ENCODE measurements at regions of chr2 and their contacts with region 1.

Region 1: DNA sequence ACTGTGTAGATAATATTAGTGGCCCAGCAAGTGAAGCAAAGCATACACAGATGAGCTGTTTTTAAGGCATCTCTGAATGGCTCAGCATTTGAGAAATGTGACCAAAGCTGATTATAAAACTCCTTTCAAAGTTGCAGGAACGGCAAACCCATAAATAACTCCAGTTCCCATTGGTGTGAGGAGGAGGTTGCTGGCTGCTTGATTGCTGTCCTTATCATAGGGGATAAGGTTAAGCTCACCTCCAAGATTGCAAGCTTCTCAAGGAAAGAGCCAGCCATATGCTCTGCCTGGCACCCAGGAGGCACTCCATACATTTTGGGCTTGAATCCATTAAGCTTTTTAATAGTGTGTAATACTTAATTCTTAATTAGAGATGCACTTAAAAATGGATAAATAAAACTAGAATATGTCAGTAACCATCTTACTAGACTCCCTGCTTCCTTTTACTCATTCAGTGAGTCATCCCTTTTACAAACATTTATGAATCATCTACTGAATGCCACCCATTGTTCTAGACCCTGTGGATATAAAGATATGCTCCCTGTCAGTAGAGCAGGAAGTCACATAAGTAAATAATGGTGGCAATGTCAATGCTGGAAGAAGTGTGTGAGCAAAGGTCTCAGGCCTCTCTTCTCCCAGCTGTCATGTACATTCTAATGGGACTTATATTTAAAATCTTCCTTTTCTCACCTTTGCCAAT is 99.3 kb downstream of the SPATS2L start:
- DNase-seq: no peak
- H3K4me3 Mint-ChIP-seq: no peak overlapping the region
- H3K27ac Mint-ChIP-seq: peak overlapping the region; percentile 25
- H3K4me1 Mint-ChIP-seq: peaks cover 68% of the 10 kb centered on the region
- H3K27me3 Mint-ChIP-seq: no peaks in the 10 kb centered on the region

Region 2: GRCh38 chr2:200383383-200384110 is 22.2 kb before region 1 on chr2:
- intact Hi-C with region 1: loop called (anchors 2 kb)
- DNase-seq: no peak
- H3K4me3 Mint-ChIP-seq: peak overlapping the region; percentile 56
- H3K27ac Mint-ChIP-seq: peak overlapping the region; percentile 28
- H3K4me1 Mint-ChIP-seq: peaks cover 54% of the 10 kb centered on the region
- H3K27me3 Mint-ChIP-seq: peaks cover 2% of the 10 kb centered on the region

Region 3: GRCh38 chr2:200422532-200423261 is 16.9 kb after region 1 on chr2:
- intact Hi-C with region 1: loop called (anchors 2 kb)
- DNase-seq: no peak
- H3K4me3 Mint-ChIP-seq: no peak overlapping the region
- H3K27ac Mint-ChIP-seq: peak overlapping the region; percentile 6
- H3K4me1 Mint-ChIP-seq: peaks cover 20% of the 10 kb centered on the region
- H3K27me3 Mint-ChIP-seq: no peaks in the 10 kb centered on the region

Region 4: DNA sequence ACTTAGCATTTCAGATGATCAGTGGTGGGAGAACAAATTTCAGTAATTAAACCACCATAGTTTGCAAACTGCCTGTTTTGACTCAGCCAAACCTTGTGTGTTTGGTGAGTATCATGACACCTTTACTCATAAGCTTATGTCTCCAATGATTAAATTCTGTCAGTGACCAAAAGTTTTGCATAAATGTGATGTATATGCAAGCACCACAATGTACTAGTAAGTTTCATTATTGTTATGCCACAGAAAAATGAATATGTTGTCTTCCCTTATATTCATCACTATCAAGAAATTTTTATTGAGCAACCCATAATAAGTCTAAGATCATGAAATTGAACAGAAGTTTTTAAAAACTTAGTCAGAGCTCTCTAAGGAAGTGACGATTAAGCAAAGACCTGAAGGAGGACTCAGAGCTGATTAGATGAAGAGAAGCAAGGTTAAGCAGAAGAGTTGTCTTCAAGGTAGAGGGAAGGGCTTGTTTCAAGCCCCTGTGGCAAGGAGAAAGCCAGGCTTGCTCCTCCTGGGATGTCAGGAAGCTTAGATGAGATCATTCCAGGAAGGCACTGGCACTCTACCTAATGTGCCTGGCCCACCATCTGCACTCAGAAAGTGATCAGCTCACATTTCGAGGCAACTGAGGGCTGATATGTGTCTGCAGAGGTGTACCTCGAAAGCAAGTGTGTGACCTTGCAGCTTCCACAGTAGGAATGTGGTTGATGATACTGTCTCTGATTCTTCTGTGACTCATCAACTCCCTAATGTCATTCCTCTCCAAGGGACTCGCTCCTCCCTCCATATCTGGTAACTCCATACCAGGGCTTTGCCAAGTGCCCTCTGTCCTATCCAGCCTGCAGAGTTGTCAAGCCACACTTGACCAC is 49.4 kb after region 1 on chr2:
- intact Hi-C with region 1: loop called (anchors 2 kb)
- DNase-seq: no peak
- H3K4me3 Mint-ChIP-seq: peak overlapping the region; percentile 31
- H3K27ac Mint-ChIP-seq: peak overlapping the region; percentile 18
- H3K4me1 Mint-ChIP-seq: peaks cover 27% of the 10 kb centered on the region
- H3K27me3 Mint-ChIP-seq: no peaks in the 10 kb centered on the region

Region 5: GRCh38 chr2:200585730-200586643 is 180.2 kb after region 1 on chr2 and contains the start of gene AOX1:
- intact Hi-C with region 1: no loop called
- DNase-seq: no peak
- H3K4me3 Mint-ChIP-seq: peak within 1 kb of the TSS; percentile 76
- H3K27ac Mint-ChIP-seq: no peak within 1 kb of the TSS
- H3K4me1 Mint-ChIP-seq: peaks cover 15% of the 10 kb centered on the region
- H3K27me3 Mint-ChIP-seq: peaks cover 3% of the 10 kb centered on the region
- total RNA-seq, gene AOX1: 0.05 TPM in 1 of 2 replicates, not detected in the other